CD8-positive, alpha-beta T cell (primary cell): ENCODE measurements at regions of chr12 and their contacts with region 1.

Region 1: DNA sequence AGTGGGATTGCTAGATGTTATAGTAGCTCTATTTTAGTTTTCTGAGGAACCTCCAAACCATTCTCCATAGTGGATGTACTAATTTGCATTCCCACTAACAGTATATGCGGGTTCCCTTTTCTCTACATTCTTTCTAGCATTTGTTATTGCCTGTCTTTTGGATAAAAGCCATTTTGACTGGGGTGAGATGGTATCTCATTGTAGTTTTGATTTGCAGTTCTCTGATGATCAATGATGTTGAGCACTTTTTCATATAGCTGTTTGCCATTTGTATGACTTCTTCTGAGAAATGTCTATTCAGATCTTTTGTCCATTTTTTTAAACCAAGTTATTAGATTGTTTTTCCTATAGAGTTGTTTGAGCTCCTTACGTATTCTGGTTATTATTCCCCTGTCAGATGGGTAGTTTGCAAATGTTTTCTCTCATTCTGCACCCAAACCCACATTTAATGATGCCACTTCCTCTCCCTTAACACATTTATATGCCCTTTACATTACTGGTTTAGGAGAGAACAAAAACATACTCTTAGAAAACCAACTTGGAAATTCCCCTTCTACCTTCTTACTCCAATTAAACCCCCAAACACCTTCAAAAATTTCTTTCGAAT is 48.2 kb downstream of the NELL2 start:
- DNase-seq: peak in 2 of 9 experiments; percentile 77 to 89
- ATAC-seq: peak; percentile 86
- H3K4me3 ChIP-seq: peak overlapping the region in 1 of 2 experiments; percentile 9
- H3K4me3 Mint-ChIP-seq: peak overlapping the region; percentile 65
- H3K27ac ChIP-seq: peak overlapping the region; percentile 63 to 78
- H3K27ac Mint-ChIP-seq: peak overlapping the region; percentile 90
- H3K4me1 ChIP-seq: peaks cover 58% of the 10 kb centered on the region
- H3K4me1 Mint-ChIP-seq: peaks cover 69% of the 10 kb centered on the region
- H3K27me3 ChIP-seq: no peaks in the 10 kb centered on the region
- H3K27me3 Mint-ChIP-seq: no peaks in the 10 kb centered on the region
- CTCF ChIP-seq: no peak

Region 2: DNA sequence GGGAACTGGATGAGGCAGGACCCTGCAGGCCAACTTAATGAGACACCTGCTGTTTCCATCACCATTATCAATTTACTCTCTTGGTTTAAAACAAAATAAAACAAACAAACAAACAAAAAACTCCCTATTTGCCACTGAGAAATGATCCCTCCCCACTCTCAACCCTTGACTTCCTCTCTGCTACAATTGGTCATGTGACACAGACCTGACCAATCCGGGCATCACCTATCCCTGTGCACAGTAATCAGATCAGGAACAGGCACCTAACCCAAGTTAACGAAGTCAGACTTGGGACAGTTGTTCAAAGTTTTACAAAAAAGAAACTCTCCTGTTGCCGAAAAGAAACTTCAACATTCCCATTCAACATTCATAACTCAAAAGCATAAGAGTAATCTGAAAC is 10.2 kb before region 1 on chr12:
- CTCF ChIA-PET with region 1: interaction called, 16 read pairs
- POLR2A ChIA-PET with region 1: interaction called, 5 read pairs
- intact Hi-C with region 1: loop called in 1 of 2 experiments (anchors 1 kb)
- DNase-seq: peak in 1 of 9 experiments; percentile 42
- ATAC-seq: no peak
- H3K4me3 ChIP-seq: no peak overlapping the region
- H3K4me3 Mint-ChIP-seq: no peak overlapping the region
- H3K27ac ChIP-seq: peak overlapping the region in 1 of 2 experiments; percentile 2
- H3K27ac Mint-ChIP-seq: peak overlapping the region; percentile 80
- H3K4me1 ChIP-seq: peaks cover 79% of the 10 kb centered on the region
- H3K4me1 Mint-ChIP-seq: peaks cover 77% of the 10 kb centered on the region
- H3K27me3 ChIP-seq: no peaks in the 10 kb centered on the region
- H3K27me3 Mint-ChIP-seq: no peaks in the 10 kb centered on the region
- CTCF ChIP-seq: no peak

Region 3: GRCh38 chr12:44842669-44843068 is 14.7 kb after region 1 on chr12:
- CTCF ChIA-PET with region 1: interaction called, 6 read pairs
- POLR2A ChIA-PET with region 1: interaction called, 44 read pairs
- intact Hi-C with region 1: loop called (anchors 1 to 2 kb)
- DNase-seq: peak in 4 of 9 experiments; percentile 30 to 67 (median 38)
- ATAC-seq: peak; percentile 65
- H3K4me3 ChIP-seq: peak overlapping the region; percentile 23 to 43
- H3K4me3 Mint-ChIP-seq: peak overlapping the region; percentile 73
- H3K27ac ChIP-seq: peak overlapping the region; percentile 62 to 66
- H3K27ac Mint-ChIP-seq: peak overlapping the region; percentile 95
- H3K4me1 ChIP-seq: peaks cover 95% of the 10 kb centered on the region
- H3K4me1 Mint-ChIP-seq: peaks cover 87% of the 10 kb centered on the region
- H3K27me3 ChIP-seq: no peaks in the 10 kb centered on the region
- H3K27me3 Mint-ChIP-seq: no peaks in the 10 kb centered on the region
- CTCF ChIP-seq: no peak

Region 4: GRCh38 chr12:44942714-44943113 is 114.8 kb after region 1 on chr12:
- CTCF ChIA-PET with region 1: no interaction called
- POLR2A ChIA-PET with region 1: no interaction called
- intact Hi-C with region 1: no loop called
- DNase-seq: no peak
- ATAC-seq: no peak
- H3K4me3 ChIP-seq: no peak overlapping the region
- H3K4me3 Mint-ChIP-seq: no peak overlapping the region
- H3K27ac ChIP-seq: no peak overlapping the region
- H3K27ac Mint-ChIP-seq: no peak overlapping the region
- H3K4me1 ChIP-seq: no peaks in the 10 kb centered on the region
- H3K4me1 Mint-ChIP-seq: no peaks in the 10 kb centered on the region
- H3K27me3 ChIP-seq: no peaks in the 10 kb centered on the region
- H3K27me3 Mint-ChIP-seq: peaks cover 2% of the 10 kb centered on the region
- CTCF ChIP-seq: no peak